Activated CD8-positive, alpha-beta T cell treated with anti-CD3 and anti-CD28 coated beads, Interleukin-2, amount 10 ng/mL, durations not matched to agents 7 days and 5 days (primary cell): ENCODE measurements at regions of chr1 and their contacts with region 1.

Region 1: DNA sequence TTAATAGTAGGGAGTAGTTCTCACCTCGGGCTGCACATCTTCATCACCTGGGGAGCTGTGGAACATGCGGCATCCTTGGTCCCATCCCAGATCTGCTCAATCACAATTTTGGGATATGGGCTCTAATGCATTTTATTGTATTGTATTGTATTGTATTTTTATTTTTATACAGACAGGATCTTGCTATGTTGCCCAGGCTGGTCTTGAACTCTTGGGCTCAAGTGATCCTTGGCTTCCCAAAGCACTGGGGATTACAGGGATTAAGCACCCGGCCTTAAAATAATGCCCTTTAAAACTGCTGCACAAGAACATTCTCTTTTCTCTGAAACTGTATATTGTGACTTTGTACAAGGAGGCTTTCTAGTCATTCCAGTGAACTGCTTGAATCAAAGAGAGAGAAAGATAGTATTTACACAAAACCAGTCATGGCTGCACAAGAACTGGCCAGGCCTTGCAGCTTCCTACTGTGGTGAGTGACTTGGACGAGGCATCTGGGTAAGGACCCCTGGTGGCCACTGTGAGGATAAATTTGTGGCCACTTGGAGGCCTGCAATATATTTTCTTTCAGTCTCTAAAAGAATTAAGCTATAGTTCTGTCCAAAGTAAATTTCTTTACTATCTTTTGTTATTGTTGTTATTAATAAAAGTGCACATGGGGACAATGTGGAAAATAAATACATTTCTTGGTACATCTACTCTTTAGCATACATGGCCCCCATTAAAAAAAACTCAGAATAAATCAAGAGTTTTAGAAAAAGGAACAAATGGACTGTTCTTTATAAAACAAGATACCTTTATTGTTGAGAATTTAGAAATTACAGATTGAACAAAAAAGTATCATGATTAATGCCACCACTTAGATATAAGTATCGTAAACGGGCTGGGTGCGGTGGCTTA is 48.0 kb downstream of the TBCE start:
- DNase-seq: peak; percentile 74
- ATAC-seq: peak; percentile 53
- H3K4me3 Mint-ChIP-seq: no peak overlapping the region
- H3K27ac Mint-ChIP-seq: no peak overlapping the region
- H3K4me1 Mint-ChIP-seq: peaks cover 9% of the 10 kb centered on the region
- H3K27me3 Mint-ChIP-seq: no peaks in the 10 kb centered on the region

Region 2: GRCh38 chr1:235105051-235106043 is 309.9 kb before region 1 on chr1:
- CTCF ChIA-PET with region 1: interaction called, 33 read pairs
- POLR2A ChIA-PET with region 1: no interaction called
- DNase-seq: peak; percentile 46
- ATAC-seq: peak; percentile 32
- H3K4me3 Mint-ChIP-seq: peak overlapping the region; percentile 66
- H3K27ac Mint-ChIP-seq: peak overlapping the region; percentile 79
- H3K4me1 Mint-ChIP-seq: peaks cover 46% of the 10 kb centered on the region
- H3K27me3 Mint-ChIP-seq: no peaks in the 10 kb centered on the region

Region 3: DNA sequence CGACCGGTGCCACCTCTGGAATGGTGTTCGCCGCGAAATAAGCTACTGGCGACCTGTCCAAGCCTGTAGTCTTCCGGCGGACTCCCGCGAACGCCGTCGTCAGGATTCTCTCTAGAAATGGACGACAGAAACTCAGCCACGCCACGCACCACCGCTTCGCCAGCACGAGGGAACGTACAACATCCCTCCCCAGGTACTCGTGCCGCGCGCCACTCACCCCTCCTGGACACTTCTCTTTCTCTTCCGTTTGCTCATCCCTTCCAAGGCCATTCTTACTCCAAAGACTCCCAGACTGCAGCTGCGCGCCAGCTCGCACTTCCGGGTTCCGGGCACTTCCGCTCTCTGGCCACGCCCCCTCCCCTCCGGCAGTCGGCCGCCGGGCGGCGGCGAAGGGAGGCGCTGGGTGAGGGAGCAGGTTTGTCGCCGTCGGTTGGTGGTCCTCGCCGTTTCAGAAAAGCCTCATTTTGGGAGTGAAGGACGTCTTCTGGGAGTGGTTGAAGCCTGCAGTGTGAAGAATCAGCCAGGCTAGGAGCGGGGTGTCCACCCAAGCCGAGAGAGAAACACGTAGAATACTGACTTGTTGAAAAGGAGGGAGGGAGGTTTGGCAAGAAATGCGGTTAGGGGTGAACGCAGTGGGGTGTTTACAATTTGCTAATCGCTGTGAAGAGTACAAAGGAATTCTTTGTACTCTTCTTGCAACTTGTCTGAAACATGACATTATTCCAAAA is 254.1 kb before region 1 on chr1 and contains the start of gene RBM34:
- CTCF ChIA-PET with region 1: interaction called, 17 read pairs
- POLR2A ChIA-PET with region 1: interaction called, 4 read pairs
- DNase-seq: peak; percentile 94
- ATAC-seq: peak; percentile 92
- H3K4me3 Mint-ChIP-seq: peak within 1 kb of the TSS; percentile 97
- H3K27ac Mint-ChIP-seq: peak within 1 kb of the TSS; percentile 100
- H3K4me1 Mint-ChIP-seq: peaks cover 13% of the 10 kb centered on the region
- H3K27me3 Mint-ChIP-seq: no peaks in the 10 kb centered on the region
- total RNA-seq, gene RBM34: 115 to 117 TPM

Region 4: DNA sequence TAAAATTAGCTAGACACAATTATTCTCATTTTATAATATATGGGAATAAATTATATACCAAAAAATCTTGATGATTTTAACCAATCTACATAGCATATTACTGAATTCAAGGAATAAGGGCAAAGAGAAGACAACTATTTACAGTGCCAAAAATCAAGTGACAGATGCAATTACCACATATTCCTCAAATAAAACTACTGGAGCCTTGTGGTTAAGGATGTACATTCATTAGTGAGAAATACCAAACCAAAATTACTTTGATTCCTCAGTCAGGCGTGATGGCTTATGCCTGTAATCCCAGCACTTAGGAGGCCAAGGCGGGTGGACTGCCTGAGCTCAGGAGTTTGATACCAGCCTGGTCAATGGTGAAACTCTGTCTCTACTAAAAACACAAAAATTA is 185.4 kb before region 1 on chr1:
- CTCF ChIA-PET with region 1: interaction called, 10 read pairs
- POLR2A ChIA-PET with region 1: no interaction called
- DNase-seq: no peak
- ATAC-seq: no peak
- H3K4me3 Mint-ChIP-seq: no peak overlapping the region
- H3K27ac Mint-ChIP-seq: no peak overlapping the region
- H3K4me1 Mint-ChIP-seq: no peaks in the 10 kb centered on the region
- H3K27me3 Mint-ChIP-seq: no peaks in the 10 kb centered on the region

Region 5: DNA sequence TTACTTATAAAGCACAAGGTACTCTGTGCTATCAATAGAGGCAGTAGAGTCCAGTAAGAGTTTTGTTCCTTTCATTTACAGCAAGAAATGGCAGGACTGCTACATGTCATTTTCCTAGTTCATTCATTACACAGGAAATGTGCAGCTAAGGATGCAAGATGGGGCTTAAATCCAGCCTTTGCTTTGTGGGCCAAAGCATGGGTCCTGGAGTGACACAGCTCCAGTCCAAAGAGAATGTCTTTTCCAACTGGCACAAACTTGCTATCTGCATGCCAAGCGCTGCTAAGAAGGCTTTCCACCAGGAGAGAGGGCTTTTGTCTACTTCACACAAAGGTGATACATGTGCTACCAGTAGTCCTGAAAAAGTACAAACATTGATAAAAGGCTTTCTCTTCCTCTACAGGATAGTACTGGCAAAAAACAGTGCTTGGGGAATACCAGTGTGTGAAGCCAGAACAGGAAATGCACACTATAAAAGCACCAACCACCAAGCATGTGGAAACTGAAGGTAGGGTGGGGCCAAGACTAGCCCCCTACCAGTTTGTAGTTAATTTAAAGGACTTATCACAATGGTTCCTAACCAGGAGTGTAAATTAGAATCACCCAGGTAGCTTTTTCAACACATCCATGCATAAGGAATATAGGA is 156.0 kb before region 1 on chr1:
- CTCF ChIA-PET with region 1: interaction called, 31 read pairs
- POLR2A ChIA-PET with region 1: no interaction called
- DNase-seq: no peak
- ATAC-seq: peak; percentile 54
- H3K4me3 Mint-ChIP-seq: no peak overlapping the region
- H3K27ac Mint-ChIP-seq: peak overlapping the region; percentile 23
- H3K4me1 Mint-ChIP-seq: peaks cover 38% of the 10 kb centered on the region
- H3K27me3 Mint-ChIP-seq: no peaks in the 10 kb centered on the region

Region 6: DNA sequence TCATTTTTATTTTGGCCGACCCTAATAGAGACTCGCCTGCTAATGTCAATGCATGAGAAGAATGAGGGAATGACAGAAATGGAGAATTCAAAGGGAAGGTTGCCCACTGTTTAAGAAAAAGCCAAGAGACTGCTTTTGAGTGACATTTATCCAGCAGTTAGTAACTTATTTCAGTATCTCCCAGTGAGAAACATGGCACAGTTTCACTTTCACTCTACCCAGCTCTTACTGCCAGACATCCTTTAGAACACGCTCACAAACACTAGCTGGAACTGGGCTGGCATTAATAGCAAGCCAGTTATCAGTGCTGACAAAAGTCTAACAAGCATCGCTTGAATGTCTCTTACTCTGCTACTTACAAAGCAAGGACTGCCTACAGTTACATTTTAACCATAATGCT is 78.4 kb before region 1 on chr1:
- CTCF ChIA-PET with region 1: interaction called, 24 read pairs
- POLR2A ChIA-PET with region 1: no interaction called
- DNase-seq: peak; percentile 59
- ATAC-seq: peak; percentile 98
- H3K4me3 Mint-ChIP-seq: peak overlapping the region; percentile 65
- H3K27ac Mint-ChIP-seq: peak overlapping the region; percentile 94
- H3K4me1 Mint-ChIP-seq: peaks cover 21% of the 10 kb centered on the region
- H3K27me3 Mint-ChIP-seq: no peaks in the 10 kb centered on the region

Region 7: DNA sequence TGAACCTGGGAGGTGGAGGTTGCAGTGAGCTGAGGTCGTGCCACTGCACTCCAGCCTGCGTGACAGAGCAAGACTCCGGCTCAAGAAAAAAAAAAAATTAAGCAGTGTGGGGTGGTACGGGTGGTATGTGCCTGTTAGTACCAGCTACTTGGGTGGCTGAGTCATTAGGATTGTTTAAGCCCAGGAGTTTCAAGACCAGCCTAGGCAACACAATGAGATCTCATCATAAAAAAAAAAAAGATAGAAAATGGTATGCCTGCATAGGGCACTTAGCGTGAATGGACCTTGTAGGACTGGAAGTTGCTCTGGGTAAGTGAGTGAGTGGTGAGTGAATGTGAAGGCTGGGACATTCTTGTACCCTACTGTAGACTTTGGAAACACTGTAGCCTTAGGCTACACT is 11.1 kb before region 1 on chr1:
- CTCF ChIA-PET with region 1: interaction called, 26 read pairs
- POLR2A ChIA-PET with region 1: no interaction called
- DNase-seq: no peak
- ATAC-seq: no peak
- H3K4me3 Mint-ChIP-seq: no peak overlapping the region
- H3K27ac Mint-ChIP-seq: no peak overlapping the region
- H3K4me1 Mint-ChIP-seq: no peaks in the 10 kb centered on the region
- H3K27me3 Mint-ChIP-seq: no peaks in the 10 kb centered on the region

Region 8: GRCh38 chr1:235607284-235607683 is 192.0 kb after region 1 on chr1:
- CTCF ChIA-PET with region 1: no interaction called
- POLR2A ChIA-PET with region 1: no interaction called
- DNase-seq: no peak
- ATAC-seq: no peak
- H3K4me3 Mint-ChIP-seq: no peak overlapping the region
- H3K27ac Mint-ChIP-seq: no peak overlapping the region
- H3K4me1 Mint-ChIP-seq: no peaks in the 10 kb centered on the region
- H3K27me3 Mint-ChIP-seq: no peaks in the 10 kb centered on the region